Activated T-helper 1 cell treated with anti-CD3 and anti-CD28 coated beads, Interleukin-12 subunit alpha, Interleukin-12 subunit beta, Interleukin-2, Interleukin-4 antibody, amounts not matched to agents 30 ng/mL and 10 ng/mL and 1 ng/mL, durations not matched to agents 14 hours and 24 hours and 36 hours (primary cell): ENCODE measurements at regions of chr14 and their contacts with region 1.

Region 1: DNA sequence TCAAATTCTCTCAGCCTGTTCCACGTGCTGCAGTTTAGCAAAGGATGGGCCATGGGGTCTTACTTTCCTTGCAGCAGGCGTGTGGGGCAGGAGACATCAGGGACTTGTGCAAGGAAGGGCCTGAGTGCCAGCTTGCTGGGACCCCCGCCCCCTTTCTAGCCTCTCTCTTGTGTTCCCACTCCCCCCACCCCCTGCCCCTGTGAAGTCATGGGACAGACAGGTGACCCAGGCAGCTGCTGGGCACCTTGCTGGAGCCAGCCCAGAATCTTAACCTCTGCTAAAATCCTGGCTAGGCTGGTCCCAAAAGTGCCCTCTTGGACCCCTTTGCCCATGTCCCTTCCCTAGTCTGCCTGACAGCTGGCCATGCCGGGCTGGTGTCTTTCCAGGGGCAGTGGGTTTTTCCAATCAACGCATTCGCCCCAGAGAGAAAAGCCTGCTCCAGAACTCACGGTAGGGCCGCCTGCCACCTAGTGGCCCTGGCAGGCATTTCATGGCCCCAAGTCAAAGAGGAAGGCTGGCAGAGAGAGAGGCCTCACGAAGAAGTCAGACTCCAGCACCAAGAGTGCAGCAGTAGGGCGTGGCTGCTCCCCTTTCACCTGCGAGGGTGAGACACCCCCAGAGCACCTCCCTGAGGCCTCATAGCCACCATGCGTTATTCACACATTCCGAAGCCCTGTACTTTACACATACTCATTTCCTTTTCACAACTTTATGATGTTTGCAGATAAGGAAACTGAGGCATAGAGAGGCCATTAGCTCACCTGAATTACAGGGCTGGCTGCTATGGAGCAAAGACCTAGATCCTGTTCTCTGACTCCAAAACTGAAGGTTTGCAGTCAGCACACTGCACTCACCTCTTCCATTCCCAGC is 67.4 kb downstream of the LGMN start:
- DNase-seq: peak; percentile 66
- H3K4me3 Mint-ChIP-seq: no peak overlapping the region
- H3K27ac Mint-ChIP-seq: no peak overlapping the region
- H3K4me1 Mint-ChIP-seq: peaks cover 43% of the 10 kb centered on the region
- H3K27me3 Mint-ChIP-seq: no peaks in the 10 kb centered on the region

Region 2: GRCh38 chr14:92135267-92135666 is 545.7 kb before region 1 on chr14:
- intact Hi-C with region 1: loop called (anchors 1 kb)
- DNase-seq: no peak
- H3K4me3 Mint-ChIP-seq: no peak overlapping the region
- H3K27ac Mint-ChIP-seq: no peak overlapping the region
- H3K4me1 Mint-ChIP-seq: peaks cover 6% of the 10 kb centered on the region
- H3K27me3 Mint-ChIP-seq: no peaks in the 10 kb centered on the region

Region 3: GRCh38 chr14:92556255-92556741 is 124.7 kb before region 1 on chr14:
- intact Hi-C with region 1: loop called (anchors 1 kb)
- DNase-seq: no peak
- H3K4me3 Mint-ChIP-seq: peak overlapping the region; percentile 28
- H3K27ac Mint-ChIP-seq: peak overlapping the region; percentile 92
- H3K4me1 Mint-ChIP-seq: peaks cover 71% of the 10 kb centered on the region
- H3K27me3 Mint-ChIP-seq: no peaks in the 10 kb centered on the region

Region 4: DNA sequence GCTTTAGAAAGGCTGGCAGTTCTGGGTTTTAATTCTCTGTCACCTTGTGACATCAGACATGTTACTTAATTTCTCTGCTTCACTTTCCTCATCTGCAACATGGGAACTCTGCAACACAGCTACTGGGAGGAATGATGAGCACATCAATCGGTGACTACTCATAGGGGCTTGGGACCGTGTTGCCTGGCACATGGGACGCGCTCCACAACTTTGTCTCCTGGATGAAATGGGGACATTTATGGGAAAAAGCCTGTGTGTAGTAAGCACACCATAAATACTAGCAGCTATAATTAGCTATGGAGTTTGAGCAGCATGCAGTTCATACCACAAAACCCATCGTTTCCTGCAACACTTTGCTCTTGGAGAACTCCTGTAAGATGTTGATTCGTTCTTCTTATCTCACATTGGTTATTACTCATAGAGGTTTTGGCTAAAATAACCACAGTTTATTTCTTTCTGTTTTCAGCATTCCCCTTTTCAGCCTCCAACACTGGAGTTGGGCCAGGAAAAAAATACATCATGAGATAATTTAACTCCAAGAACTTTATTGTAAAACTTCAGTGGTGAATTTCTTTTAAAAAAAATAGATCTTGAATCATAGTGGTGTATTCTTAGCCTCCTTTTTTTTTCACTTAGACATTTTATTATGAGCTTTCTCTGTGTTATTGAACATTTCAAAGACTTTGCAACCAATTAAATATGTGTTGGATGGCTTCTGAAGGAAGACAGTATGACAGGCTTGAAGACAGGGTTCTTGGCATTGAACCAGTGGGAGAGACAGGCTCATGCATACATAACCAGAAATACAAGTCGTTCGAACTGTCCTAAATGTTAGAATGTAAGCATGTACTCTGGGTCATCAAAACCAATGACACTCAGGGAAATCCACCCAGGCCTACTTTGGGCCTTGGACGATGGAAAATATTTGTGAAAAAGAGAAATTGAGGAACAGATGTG is 94.8 kb before region 1 on chr14:
- intact Hi-C with region 1: loop called (anchors 1 kb)
- DNase-seq: peak; percentile 36
- H3K4me3 Mint-ChIP-seq: peak overlapping the region; percentile 67
- H3K27ac Mint-ChIP-seq: peak overlapping the region; percentile 82
- H3K4me1 Mint-ChIP-seq: peaks cover 83% of the 10 kb centered on the region
- H3K27me3 Mint-ChIP-seq: peaks cover 2% of the 10 kb centered on the region

Region 5: GRCh38 chr14:92668276-92668973 is 12.6 kb before region 1 on chr14:
- intact Hi-C with region 1: loop called (anchors 1 kb)
- DNase-seq: no peak
- H3K4me3 Mint-ChIP-seq: peak overlapping the region; percentile 6
- H3K27ac Mint-ChIP-seq: peak overlapping the region; percentile 64
- H3K4me1 Mint-ChIP-seq: peaks cover 41% of the 10 kb centered on the region
- H3K27me3 Mint-ChIP-seq: no peaks in the 10 kb centered on the region

Region 6: GRCh38 chr14:92922883-92923743 is 242.1 kb after region 1 on chr14 and contains the start of gene CHGA:
- intact Hi-C with region 1: no loop called
- DNase-seq: peak; percentile 41
- H3K4me3 Mint-ChIP-seq: no peak within 1 kb of the TSS
- H3K27ac Mint-ChIP-seq: no peak within 1 kb of the TSS
- H3K4me1 Mint-ChIP-seq: no peaks in the 10 kb centered on the region
- H3K27me3 Mint-ChIP-seq: peaks cover 7% of the 10 kb centered on the region
- total RNA-seq, gene CHGA: not detected in 2 replicates